ENCODE measurements at regions of chr1 and their contacts with region 1.

Region 1: GRCh38 chr1:229625915-229626831 is at the starts of genes TAF5L and URB2:
- DNase-seq: peak; percentile 86
- ATAC-seq: peak; percentile 92
- H3K4me3 Mint-ChIP-seq: peak within 1 kb of the TSS; percentile 99
- H3K27ac Mint-ChIP-seq: peak within 1 kb of the TSS; percentile 92
- H3K4me1 Mint-ChIP-seq: peaks cover 58% of the 10 kb centered on the region
- H3K27me3 Mint-ChIP-seq: no peaks in the 10 kb centered on the region
- CTCF ChIP-seq: no peak
- total RNA-seq, gene TAF5L: 22.0 and 24.4 TPM in 2 replicates
- total RNA-seq, gene URB2: 17.4 and 21.8 TPM in 2 replicates

Region 2: GRCh38 chr1:229507951-229508822 is 118.0 kb before region 1 on chr1 and contains the start of gene NUP133:
- CTCF ChIA-PET with region 1: no interaction called
- POLR2A ChIA-PET with region 1: interaction called, 5 read pairs
- intact Hi-C with region 1: loop called (anchors 1 kb)
- DNase-seq: peak; percentile 97
- ATAC-seq: peak; percentile 92
- H3K4me3 Mint-ChIP-seq: peak within 1 kb of the TSS; percentile 90
- H3K27ac Mint-ChIP-seq: peak within 1 kb of the TSS; percentile 97
- H3K4me1 Mint-ChIP-seq: peaks cover 26% of the 10 kb centered on the region
- H3K27me3 Mint-ChIP-seq: peaks cover 1% of the 10 kb centered on the region
- CTCF ChIP-seq: no peak
- total RNA-seq, gene NUP133: 49.6 and 56.2 TPM in 2 replicates

Region 3: GRCh38 chr1:229579059-229579673 is 47.0 kb before region 1 on chr1:
- CTCF ChIA-PET with region 1: no interaction called
- POLR2A ChIA-PET with region 1: no interaction called
- intact Hi-C with region 1: loop called (anchors 1 kb)
- DNase-seq: no peak
- ATAC-seq: peak; percentile 91
- H3K4me3 Mint-ChIP-seq: peak overlapping the region; percentile 77
- H3K27ac Mint-ChIP-seq: peak overlapping the region; percentile 69
- H3K4me1 Mint-ChIP-seq: peaks cover 13% of the 10 kb centered on the region
- H3K27me3 Mint-ChIP-seq: no peaks in the 10 kb centered on the region
- CTCF ChIP-seq: no peak

Region 4: GRCh38 chr1:229803626-229804217 is 177.5 kb after region 1 on chr1:
- CTCF ChIA-PET with region 1: no interaction called
- POLR2A ChIA-PET with region 1: no interaction called
- intact Hi-C with region 1: no loop called
- DNase-seq: no peak
- ATAC-seq: no peak
- H3K4me3 Mint-ChIP-seq: no peak overlapping the region
- H3K27ac Mint-ChIP-seq: no peak overlapping the region
- H3K4me1 Mint-ChIP-seq: no peaks in the 10 kb centered on the region
- H3K27me3 Mint-ChIP-seq: peaks cover 2% of the 10 kb centered on the region
- CTCF ChIP-seq: no peak

Region 5: GRCh38 chr1:229887043-229887822 is 261.1 kb after region 1 on chr1:
- CTCF ChIA-PET with region 1: no interaction called
- POLR2A ChIA-PET with region 1: no interaction called
- intact Hi-C with region 1: no loop called
- DNase-seq: no peak
- ATAC-seq: no peak
- H3K4me3 Mint-ChIP-seq: no peak overlapping the region
- H3K27ac Mint-ChIP-seq: no peak overlapping the region
- H3K4me1 Mint-ChIP-seq: no peaks in the 10 kb centered on the region
- H3K27me3 Mint-ChIP-seq: peaks cover 9% of the 10 kb centered on the region
- CTCF ChIP-seq: no peak

Measured in activated B cell treated with CpG ODN at 0.5 μM for 24 hours (primary cell).